ENCODE measurements at regions of chr3 and their contacts with region 1.

Region 1: GRCh38 chr3:134754768-134755559 is 40.1 kb upstream of the EPHB1 start:
- DNase-seq: peak; percentile 39 to 60 (median 46)
- H3K4me3 ChIP-seq: no peak overlapping the region
- H3K27ac ChIP-seq: no peak overlapping the region
- H3K4me1 ChIP-seq: no peaks in the 10 kb centered on the region
- H3K27me3 ChIP-seq: peaks cover 0 to under 1% (median 0%) of the 10 kb centered on the region in 5 experiments

Region 2: GRCh38 chr3:134607054-134608022 is 147.6 kb before region 1 on chr3:
- CTCF ChIA-PET with region 1: interaction called, 15 read pairs
- POLR2A ChIA-PET with region 1: no interaction called
- DNase-seq: peak in 1 of 3 donors; percentile 19
- H3K4me3 ChIP-seq: no peak overlapping the region
- H3K27ac ChIP-seq: no peak overlapping the region
- H3K4me1 ChIP-seq: peaks cover 3 to 93% (median 60%) of the 10 kb centered on the region in 4 experiments
- H3K27me3 ChIP-seq: no peaks in the 10 kb centered on the region